Activated B cell treated with CpG ODN at 0.5 μM for 24 hours (primary cell): ENCODE measurements at regions of chr19 and their contacts with region 1.

Region 1: DNA sequence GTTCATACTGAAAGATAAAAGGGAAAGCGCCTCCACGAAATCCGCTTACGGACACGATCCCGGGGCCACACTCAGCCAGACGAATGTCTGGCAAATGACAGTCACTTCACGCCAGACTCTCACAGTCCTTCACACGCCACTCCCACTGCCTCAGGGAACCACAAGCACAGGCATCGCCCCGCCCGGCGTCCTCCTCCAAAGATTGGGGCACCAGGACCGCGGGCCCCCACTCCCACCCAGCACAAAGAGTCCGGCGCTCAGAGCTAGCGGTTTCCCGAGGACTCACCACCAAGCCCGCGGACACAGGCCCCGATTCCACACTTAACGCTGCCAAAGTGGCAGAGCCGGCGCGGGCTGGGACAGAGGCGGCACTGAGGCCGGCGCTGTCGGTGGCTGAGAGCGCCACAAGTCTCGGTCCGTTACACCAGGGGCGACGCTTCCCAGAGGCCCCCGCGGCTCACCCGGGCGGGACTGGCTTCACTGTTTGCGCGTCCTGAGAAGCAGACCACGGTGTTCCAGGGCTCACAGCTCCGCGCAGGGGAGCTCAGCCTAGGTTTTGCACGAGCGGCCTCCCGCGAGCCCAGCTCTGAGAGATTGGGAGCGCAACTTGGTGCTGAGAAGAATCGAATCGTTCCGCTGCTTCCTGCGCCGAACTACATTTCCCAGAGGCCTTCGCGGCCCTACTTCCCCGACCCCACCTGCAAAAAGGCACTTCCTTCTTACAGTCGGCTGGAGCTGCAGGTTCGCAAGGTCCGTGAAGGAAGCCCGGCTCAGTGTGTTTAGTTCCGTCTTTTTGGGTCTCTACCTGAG is at the start of gene ZNF569:
- DNase-seq: peak; percentile 82
- ATAC-seq: peak; percentile 69
- H3K4me3 Mint-ChIP-seq: peak within 1 kb of the TSS; percentile 99
- H3K27ac Mint-ChIP-seq: peak within 1 kb of the TSS; percentile 97
- H3K4me1 Mint-ChIP-seq: peaks cover 42% of the 10 kb centered on the region
- H3K27me3 Mint-ChIP-seq: no peaks in the 10 kb centered on the region
- CTCF ChIP-seq: no peak
- total RNA-seq, gene ZNF569: 6.1 and 6.8 TPM in 2 replicates

Region 2: DNA sequence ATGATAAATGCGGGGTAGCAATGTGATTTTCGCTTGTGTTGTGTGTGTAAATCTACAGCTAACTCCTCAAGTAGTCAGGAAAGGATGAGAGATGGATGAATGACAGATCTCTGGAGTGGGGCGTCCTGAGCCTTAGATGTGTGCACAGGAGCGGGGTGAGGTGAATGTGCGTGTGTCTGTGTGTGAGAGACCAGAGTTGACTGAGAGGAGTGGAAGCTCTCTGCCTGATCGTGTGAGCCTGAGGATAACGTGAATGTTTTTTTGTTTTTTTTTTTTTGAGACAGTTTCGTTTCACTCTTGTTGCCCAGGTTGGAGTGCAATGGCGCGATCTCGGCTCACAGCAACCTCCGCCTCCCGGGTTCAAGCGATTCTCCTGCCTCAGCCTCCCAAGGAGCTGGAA is 801.2 kb before region 1 on chr19:
- CTCF ChIA-PET with region 1: no interaction called
- POLR2A ChIA-PET with region 1: no interaction called
- intact Hi-C with region 1: loop called (anchors 2 kb)
- DNase-seq: no peak
- ATAC-seq: no peak
- H3K4me3 Mint-ChIP-seq: peak overlapping the region; percentile 98
- H3K27ac Mint-ChIP-seq: peak overlapping the region; percentile 72
- H3K4me1 Mint-ChIP-seq: peaks cover 31% of the 10 kb centered on the region
- H3K27me3 Mint-ChIP-seq: no peaks in the 10 kb centered on the region
- CTCF ChIP-seq: no peak

Region 3: GRCh38 chr19:36707134-36707533 is 759.9 kb before region 1 on chr19:
- CTCF ChIA-PET with region 1: no interaction called
- POLR2A ChIA-PET with region 1: no interaction called
- intact Hi-C with region 1: no loop called
- DNase-seq: no peak
- ATAC-seq: no peak
- H3K4me3 Mint-ChIP-seq: no peak overlapping the region
- H3K27ac Mint-ChIP-seq: no peak overlapping the region
- H3K4me1 Mint-ChIP-seq: no peaks in the 10 kb centered on the region
- H3K27me3 Mint-ChIP-seq: no peaks in the 10 kb centered on the region
- CTCF ChIP-seq: no peak

Region 4: GRCh38 chr19:36837906-36838783 is 628.9 kb before region 1 on chr19 and contains the start of gene ZNF790:
- CTCF ChIA-PET with region 1: no interaction called
- POLR2A ChIA-PET with region 1: no interaction called
- intact Hi-C with region 1: loop called (anchors 5 kb)
- DNase-seq: peak; percentile 76
- ATAC-seq: peak; percentile 94
- H3K4me3 Mint-ChIP-seq: no peak within 1 kb of the TSS
- H3K27ac Mint-ChIP-seq: no peak within 1 kb of the TSS
- H3K4me1 Mint-ChIP-seq: peaks cover 2% of the 10 kb centered on the region
- H3K27me3 Mint-ChIP-seq: no peaks in the 10 kb centered on the region
- CTCF ChIP-seq: no peak
- total RNA-seq, gene ZNF790: 10.3 and 11.5 TPM in 2 replicates

Region 5: DNA sequence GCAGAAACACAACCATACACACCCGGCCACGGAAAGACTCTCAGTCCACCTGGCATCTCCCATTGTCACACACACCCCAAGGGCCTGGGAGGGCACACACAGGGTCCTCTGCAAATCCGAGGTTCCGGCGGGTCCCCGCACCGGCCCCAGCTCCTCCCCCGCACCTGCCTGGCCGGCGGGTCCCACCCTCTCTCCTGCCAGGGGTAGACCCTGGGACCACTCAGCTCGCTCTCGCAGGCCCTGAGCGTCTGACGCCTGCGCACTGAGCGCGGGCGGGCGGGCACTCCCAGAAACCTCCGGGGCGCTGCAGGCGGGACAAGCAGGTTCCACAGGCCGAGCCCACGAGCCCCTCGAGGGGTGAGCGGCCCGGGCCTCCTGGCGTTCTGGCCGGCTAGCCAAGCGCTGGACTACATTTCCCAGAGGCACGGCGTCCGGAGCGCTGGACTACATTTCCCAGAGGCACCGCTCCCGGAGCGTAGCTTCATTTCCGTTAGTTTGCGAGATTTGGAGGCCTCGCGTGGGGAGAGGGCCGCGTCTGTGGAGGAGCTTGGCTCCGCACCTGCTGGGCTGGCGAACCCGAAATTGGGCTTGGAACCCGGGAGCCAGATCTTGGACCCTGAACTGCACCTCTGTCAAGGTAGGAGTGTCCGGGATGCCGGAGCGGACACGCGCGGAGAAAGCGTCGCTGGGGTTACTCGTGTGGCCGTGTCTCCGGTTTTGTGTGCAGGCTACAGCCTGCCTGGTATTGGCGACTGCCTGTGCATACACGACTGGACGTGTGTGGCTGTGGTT is 388.9 kb before region 1 on chr19 and contains the start of gene ZNF420:
- CTCF ChIA-PET with region 1: no interaction called
- POLR2A ChIA-PET with region 1: interaction called, 3 read pairs
- intact Hi-C with region 1: loop called (anchors 1 kb)
- DNase-seq: peak; percentile 83
- ATAC-seq: peak; percentile 96
- H3K4me3 Mint-ChIP-seq: peak within 1 kb of the TSS; percentile 97
- H3K27ac Mint-ChIP-seq: peak within 1 kb of the TSS; percentile 92
- H3K4me1 Mint-ChIP-seq: peaks cover 32% of the 10 kb centered on the region
- H3K27me3 Mint-ChIP-seq: no peaks in the 10 kb centered on the region
- CTCF ChIP-seq: no peak
- total RNA-seq, gene ZNF420: 11.6 and 11.9 TPM in 2 replicates

Region 6: DNA sequence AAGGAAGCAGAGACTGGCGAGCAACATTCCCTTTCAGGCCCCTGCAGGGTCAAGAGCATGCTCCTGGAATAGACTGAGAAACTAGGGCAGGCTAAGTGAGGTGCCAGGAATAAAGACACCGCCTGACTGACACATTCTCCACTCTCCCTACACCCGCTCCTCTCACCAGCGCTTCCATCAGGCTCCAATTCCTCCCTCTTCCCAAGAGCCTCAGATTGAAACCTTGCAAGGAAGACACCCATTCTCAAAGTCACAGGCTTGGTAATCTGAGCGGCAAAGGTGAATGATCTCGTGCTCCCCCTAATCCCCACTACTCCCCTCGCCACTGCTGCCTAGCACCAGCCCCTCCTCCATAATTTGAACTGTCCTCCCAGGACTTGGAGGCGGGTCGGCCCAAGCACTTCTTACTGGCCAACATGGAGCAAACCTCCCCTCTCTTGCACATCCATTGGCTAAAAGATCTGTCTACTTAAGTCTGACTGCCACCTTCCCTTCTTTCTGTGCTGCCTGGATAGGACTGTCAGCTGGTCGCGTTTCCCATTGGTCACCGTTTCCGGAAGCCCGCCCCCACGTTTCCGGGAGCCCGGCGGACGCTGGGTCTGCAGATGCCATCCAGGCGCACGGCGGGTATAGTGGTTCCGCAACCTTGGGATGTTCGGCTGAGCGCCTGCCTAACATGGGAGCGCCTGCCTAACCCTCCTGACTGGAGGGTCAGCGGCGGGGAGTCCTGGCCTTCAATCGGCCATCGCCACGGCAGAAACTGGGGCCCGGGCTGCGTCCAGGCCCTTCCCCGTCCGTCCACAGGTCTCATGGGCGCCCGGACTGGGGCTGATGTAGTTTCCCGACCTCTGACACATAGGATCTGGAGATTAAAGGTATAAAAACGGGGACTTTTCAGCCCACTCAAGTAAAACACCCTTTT is 215.4 kb before region 1 on chr19:
- CTCF ChIA-PET with region 1: no interaction called
- POLR2A ChIA-PET with region 1: no interaction called
- intact Hi-C with region 1: no loop called
- DNase-seq: peak; percentile 64
- ATAC-seq: peak; percentile 99
- H3K4me3 Mint-ChIP-seq: peak overlapping the region; percentile 88
- H3K27ac Mint-ChIP-seq: peak overlapping the region; percentile 68
- H3K4me1 Mint-ChIP-seq: peaks cover 10% of the 10 kb centered on the region
- H3K27me3 Mint-ChIP-seq: no peaks in the 10 kb centered on the region
- CTCF ChIP-seq: no peak

Region 7: DNA sequence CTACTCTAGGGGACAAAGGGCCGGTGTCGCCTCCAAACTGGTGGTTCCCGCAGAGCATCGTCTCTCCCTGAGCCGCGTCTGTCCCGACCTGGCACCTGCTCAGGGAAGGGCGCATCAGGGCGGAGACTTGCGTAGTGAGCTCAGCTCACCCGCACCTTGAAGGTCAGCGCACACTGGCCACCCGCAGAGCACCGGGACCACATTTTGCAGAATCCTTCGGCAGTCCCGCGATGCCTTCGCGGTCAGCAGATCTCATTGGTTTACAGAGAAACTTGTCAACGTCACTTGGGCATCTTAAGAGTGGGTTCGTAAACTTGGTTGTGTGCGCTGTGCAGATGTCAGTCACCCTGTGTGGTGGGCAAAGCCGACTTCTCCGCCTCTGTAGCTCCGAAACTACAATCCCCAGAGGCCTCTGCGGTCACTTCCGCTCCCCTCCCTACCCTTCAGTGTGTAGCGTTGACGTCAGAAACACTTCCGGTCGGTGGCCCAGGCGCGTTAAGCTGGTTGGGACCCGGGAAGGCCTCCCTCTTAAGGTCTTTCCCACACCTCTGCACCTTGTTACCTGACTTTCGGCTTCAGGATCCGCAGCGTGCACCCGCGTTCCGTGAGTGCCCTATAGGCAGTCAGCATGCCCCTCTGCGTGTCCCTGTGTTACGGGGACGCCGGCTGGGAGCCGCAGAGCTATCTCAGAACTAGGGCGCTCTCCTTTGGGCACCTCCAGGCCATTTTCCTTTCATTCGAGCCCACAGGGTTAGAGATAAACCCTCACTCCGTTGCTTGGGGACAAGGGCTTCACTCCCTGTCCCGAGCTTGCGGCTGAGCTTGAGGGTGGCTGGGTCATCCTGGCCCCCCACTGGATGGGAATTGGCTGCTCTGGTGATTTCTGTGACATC is 132.6 kb before region 1 on chr19:
- CTCF ChIA-PET with region 1: no interaction called
- POLR2A ChIA-PET with region 1: interaction called, 8 read pairs
- intact Hi-C with region 1: loop called (anchors 2 kb)
- DNase-seq: peak; percentile 74
- ATAC-seq: peak; percentile 98
- H3K4me3 Mint-ChIP-seq: peak overlapping the region; percentile 91
- H3K27ac Mint-ChIP-seq: peak overlapping the region; percentile 83
- H3K4me1 Mint-ChIP-seq: peaks cover 28% of the 10 kb centered on the region
- H3K27me3 Mint-ChIP-seq: no peaks in the 10 kb centered on the region
- CTCF ChIP-seq: no peak

Region 8: DNA sequence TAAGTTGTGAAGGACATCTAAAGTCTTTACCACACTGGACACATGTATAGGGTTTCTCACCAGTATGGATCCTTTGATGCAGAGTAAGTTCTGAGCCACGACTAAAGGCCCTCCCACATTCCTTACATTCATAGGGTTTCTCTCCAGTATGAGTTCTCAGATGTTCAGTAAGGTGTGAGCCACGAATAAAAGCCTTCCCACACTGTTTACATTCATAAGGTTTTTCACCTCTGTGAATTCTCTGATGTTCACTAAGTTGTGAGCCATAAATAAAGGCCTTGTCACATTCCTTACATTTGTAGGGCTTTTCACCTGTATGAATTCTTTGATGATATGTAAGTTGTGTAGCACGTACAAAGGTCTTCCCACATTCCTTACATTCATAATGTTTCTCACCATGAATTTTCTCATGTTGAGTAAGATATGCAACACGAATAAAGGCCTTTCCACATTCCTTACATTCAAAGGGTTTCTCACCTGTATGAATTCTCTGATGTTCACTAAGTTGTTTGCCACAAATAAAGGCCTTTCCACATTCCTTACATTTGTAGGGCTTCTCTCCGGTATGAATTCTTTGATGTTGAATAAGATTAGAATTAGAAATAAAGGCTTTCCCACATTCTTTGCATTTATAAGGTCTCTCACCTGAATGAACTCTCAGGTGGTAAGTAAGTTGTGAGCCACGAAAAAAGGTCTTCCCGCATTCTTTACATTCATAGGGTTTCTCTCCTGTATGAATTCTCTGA is 97.8 kb after region 1 on chr19:
- CTCF ChIA-PET with region 1: no interaction called
- POLR2A ChIA-PET with region 1: no interaction called
- intact Hi-C with region 1: no loop called
- DNase-seq: no peak
- ATAC-seq: no peak
- H3K4me3 Mint-ChIP-seq: no peak overlapping the region
- H3K27ac Mint-ChIP-seq: no peak overlapping the region
- H3K4me1 Mint-ChIP-seq: no peaks in the 10 kb centered on the region
- H3K27me3 Mint-ChIP-seq: no peaks in the 10 kb centered on the region
- CTCF ChIP-seq: no peak

Region 9: GRCh38 chr19:37594304-37594981 is 127.4 kb after region 1 on chr19 and contains the starts of genes ZNF540 and ZNF571:
- CTCF ChIA-PET with region 1: no interaction called
- POLR2A ChIA-PET with region 1: interaction called, 13 read pairs
- intact Hi-C with region 1: loop called (anchors 1 kb)
- DNase-seq: peak; percentile 83
- ATAC-seq: peak; percentile 97
- H3K4me3 Mint-ChIP-seq: peak within 1 kb of the TSS; percentile 98
- H3K27ac Mint-ChIP-seq: peak within 1 kb of the TSS; percentile 97
- H3K4me1 Mint-ChIP-seq: peaks cover 23% of the 10 kb centered on the region
- H3K27me3 Mint-ChIP-seq: no peaks in the 10 kb centered on the region
- CTCF ChIP-seq: no peak
- total RNA-seq, gene ZNF540: 1.9 and 2.9 TPM in 2 replicates
- total RNA-seq, gene ZNF571: 5.0 and 5.2 TPM in 2 replicates

Region 10: DNA sequence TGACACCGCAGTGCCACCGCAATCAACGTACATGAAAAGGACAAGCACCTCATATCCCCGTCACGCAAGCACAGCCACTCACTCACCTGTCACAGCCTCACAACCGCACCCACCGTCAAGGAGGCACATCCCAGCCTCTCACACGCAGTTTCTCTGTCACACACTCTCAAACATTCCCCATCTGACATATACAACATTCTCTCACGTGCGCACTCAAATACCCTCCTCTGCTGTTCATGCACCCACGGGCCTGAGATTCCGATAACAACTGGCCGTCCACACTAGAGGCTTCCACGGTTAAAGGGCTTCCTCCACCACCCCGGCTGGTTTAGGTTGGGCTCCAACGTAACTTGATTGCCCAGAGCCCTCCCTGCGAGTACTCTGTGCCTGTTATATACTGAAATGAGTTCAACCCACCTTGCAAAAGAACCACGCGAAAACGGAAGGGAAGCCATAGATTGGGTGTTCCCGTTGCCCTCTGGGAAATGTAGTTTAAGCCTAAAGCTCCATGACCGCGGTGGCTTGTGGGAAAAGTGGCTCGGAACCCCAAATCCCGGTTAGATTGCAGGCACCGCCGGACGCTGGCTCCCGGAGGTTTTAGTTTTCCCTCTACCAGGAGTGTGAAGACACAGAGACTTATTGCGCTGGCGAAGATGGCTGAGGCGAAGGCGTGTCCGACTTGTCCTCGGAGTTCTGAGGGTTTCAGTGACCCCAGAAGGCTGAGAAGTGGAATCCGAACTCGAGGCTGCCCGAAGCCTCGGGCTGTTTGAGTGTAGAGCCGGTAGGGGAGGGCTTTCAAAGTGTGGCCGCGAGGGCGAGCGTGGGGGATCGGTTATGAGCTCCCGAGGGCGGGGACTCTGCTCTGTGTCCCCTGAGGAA is 312.4 kb after region 1 on chr19 and contains the start of gene ZNF573:
- CTCF ChIA-PET with region 1: no interaction called
- POLR2A ChIA-PET with region 1: interaction called, 6 read pairs
- intact Hi-C with region 1: loop called (anchors 1 kb)
- DNase-seq: peak; percentile 70
- ATAC-seq: peak; percentile 86
- H3K4me3 Mint-ChIP-seq: peak within 1 kb of the TSS; percentile 91
- H3K27ac Mint-ChIP-seq: peak within 1 kb of the TSS; percentile 96
- H3K4me1 Mint-ChIP-seq: peaks cover 31% of the 10 kb centered on the region
- H3K27me3 Mint-ChIP-seq: no peaks in the 10 kb centered on the region
- CTCF ChIP-seq: no peak
- total RNA-seq, gene ZNF573: 18.7 and 19.8 TPM in 2 replicates